HEK293 (cell line): ENCODE measurements at regions of chr14 and their contacts with region 1.

Region 1: DNA sequence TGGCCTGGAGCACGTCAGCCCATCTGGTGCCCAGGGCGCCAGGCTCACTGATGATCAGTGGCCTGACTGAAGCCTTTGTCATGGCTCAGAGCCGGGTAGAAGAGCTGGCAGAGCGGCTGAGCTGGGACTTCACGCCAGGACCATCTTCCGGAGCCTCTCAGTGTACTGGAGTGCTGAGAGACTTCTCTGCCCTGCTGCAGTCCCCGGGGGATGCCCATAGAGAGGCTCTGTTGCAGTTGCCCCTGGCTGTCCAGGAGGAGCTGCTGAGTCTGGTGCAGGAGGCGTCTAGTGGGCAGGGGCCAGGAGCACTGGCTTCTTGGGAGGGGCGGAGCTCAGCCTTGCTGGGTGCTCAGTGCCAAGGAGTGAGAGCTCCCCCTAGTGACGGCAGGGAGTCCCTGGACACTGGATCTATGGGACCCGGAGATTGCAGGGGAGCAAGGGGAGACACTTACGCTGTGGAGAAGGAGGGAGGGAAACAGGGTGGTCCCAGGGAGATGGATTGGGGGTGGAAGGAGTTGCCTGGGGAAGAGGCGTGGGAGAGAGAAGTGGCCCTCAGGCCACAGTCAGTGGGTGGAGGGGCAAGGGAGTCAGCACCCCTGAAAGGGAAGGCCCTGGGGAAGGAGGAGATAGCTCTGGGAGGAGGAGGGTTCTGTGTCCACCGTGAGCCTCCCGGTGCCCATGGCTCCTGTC is 2.0 kb downstream of the KHNYN start:
- H3K4me3 ChIP-seq: no peak overlapping the region
- H3K27ac ChIP-seq: peak overlapping the region; percentile 43
- H3K4me1 ChIP-seq: peaks cover 3% of the 10 kb centered on the region; the same call in 1 of the 2 replicates
- CTCF ChIP-seq: peak; percentile 99

Region 2: DNA sequence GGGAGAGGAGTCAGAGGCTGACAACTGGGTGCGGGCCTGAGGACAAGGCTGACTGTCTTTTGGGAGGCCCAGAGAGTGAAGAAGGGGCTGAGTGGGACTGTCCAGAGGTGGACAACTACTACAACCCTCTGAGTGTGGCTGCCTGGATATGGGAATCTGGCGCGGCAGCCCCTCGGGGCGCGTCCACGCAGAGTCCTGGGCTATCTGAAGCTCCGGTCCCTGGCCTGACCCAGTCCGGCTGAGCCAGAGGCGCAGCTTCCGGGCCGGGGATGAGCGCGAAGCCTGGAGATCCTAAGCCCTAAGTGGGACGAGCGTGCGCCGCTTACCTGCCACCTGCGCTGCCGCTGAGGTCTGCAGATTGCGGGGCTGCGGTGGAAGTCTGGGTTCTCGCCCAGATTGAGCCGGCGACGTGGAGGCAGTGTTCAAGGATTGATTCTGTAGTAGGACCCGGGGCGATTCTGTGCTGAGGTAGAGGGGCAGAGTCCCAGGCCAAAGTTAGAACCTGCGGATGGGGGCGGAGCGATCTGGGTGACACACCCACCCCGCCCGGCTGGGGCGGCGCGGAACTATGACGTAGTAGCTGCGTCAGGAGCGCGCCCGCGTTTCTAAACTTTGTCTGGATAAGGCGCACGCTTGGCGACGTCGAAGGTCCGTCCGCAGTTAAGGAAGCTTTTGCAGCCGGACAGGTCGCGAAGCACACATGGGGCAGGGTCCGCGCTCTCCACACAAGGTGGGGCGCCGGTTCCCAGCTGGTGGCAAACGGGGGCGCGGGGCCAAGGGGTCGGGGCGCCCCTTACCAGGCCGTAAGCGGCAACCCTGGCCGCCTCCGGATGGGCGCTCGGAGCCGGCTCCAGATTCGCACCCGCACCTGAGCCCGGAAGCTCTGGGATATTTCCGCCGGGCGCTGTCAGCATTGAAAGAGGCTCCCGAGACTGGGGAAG is 132.2 kb before region 1 on chr14 and contains the starts of genes DHRS1 and NOP9:
- CTCF ChIA-PET with region 1: interaction called, 14 read pairs
- POLR2A ChIA-PET with region 1: interaction called, 6 read pairs
- H3K4me3 ChIP-seq: peak within 1 kb of the TSS; percentile 85
- H3K27ac ChIP-seq: peak within 1 kb of the TSS; percentile 71
- H3K4me1 ChIP-seq: peaks cover 12% of the 10 kb centered on the region
- CTCF ChIP-seq: no peak

Region 3: GRCh38 chr14:24332268-24332993 is 99.3 kb before region 1 on chr14:
- CTCF ChIA-PET with region 1: interaction called, 468 read pairs
- POLR2A ChIA-PET with region 1: interaction called, 21 read pairs
- H3K4me3 ChIP-seq: no peak overlapping the region
- H3K27ac ChIP-seq: no peak overlapping the region
- H3K4me1 ChIP-seq: peaks cover 4% of the 10 kb centered on the region; the same call in 1 of the 2 replicates
- CTCF ChIP-seq: peak; percentile 67; the same call in 1 of the 2 replicates

Region 4: DNA sequence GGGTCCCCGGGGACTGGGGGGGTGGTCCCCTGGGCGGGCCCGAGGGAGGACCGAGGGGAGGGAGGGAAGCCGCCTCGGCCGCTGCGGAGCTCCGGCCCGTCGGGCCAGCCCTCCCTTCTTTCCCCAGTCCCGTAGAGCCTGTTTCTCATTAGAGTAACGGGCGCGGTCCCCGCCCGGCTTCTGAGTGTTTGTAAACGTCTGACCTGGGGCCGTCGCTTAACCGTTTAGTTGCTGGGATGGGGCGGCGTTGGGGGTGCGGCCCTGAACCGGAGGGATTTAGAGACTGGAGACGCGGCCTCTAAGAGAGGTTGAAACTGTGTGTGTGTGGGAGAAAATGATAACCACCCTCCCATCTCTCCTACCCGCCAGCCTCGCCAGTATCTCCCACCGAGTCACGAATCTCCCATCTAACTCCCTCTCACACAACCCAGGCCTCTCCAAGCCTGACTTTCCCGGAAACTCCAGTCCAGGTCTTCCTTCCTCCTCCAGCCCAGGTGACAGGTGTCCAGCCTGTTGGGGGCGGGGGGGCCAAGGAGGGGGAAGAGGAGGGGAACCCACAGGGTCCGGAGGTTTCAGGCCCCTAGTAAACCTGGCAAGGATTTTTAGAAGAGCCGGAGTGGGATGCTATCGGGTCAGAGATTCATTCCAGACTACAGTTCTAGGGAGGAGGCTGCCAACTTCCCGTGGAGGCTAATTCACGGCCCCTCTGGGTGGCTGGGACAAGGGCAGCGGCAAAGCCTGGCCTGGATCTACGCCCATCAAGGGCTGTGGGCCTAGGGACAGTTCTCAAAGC is 64.8 kb before region 1 on chr14:
- CTCF ChIA-PET with region 1: interaction called, 96 read pairs
- POLR2A ChIA-PET with region 1: interaction called, 45 read pairs
- H3K4me3 ChIP-seq: peak overlapping the region; percentile 39
- H3K27ac ChIP-seq: peak overlapping the region; percentile 97
- H3K4me1 ChIP-seq: peaks cover 12% of the 10 kb centered on the region
- CTCF ChIP-seq: no peak

Region 5: DNA sequence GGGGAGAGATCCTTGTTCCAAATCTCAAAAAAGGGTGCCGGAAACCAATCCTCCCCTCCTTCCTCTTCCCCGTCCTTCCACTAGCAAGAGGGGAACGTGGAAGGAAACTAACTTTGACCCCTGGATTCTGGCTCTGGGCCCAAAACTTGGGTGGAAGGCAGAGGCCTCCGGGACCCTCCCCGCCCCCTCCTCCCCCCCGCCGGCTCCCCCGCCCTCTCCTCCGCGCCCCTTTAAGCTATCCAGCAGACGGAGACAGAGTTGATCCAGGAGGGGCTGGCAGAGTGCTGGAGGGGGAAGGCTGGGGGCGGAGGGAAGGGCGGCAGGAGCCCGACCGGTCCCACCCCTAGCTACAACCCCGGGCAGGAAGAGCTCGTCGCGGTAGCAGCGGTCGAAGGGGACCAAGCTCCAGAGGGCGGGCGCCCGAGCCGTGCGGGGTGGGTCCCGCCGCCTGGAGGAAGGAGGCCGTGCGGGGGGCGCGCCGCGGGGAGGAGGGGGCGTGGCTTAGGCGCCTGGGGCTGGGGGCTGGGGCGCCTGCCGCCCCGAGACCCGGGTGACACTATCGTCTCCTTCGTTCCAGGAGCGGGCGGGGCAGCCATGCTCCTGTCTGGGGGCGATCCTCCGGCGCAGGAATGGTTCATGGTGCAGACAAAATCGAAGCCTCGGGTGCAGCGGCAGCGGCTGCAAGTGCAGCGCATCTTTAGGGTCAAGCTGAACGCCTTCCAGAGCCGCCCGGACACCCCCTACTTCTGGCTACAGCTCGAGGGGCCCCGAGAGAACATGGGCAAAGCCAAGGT is 32.9 kb before region 1 on chr14 and contains the start of gene NYNRIN:
- CTCF ChIA-PET with region 1: interaction called, 8 read pairs
- POLR2A ChIA-PET with region 1: interaction called, 10 read pairs
- H3K4me3 ChIP-seq: peak within 1 kb of the TSS; percentile 43
- H3K27ac ChIP-seq: peak within 1 kb of the TSS; percentile 69
- H3K4me1 ChIP-seq: peaks cover 18% of the 10 kb centered on the region; the same call in 1 of the 2 replicates
- CTCF ChIP-seq: no peak

Region 6: GRCh38 chr14:24418492-24418873 is 13.2 kb before region 1 on chr14:
- CTCF ChIA-PET with region 1: interaction called, 17 read pairs
- POLR2A ChIA-PET with region 1: interaction called, 3 read pairs
- H3K4me3 ChIP-seq: no peak overlapping the region
- H3K27ac ChIP-seq: no peak overlapping the region
- H3K4me1 ChIP-seq: no peaks in the 10 kb centered on the region
- CTCF ChIP-seq: no peak

Region 7: GRCh38 chr14:24535737-24536136 is 104.0 kb after region 1 on chr14:
- CTCF ChIA-PET with region 1: no interaction called
- POLR2A ChIA-PET with region 1: no interaction called
- H3K4me3 ChIP-seq: no peak overlapping the region
- H3K27ac ChIP-seq: no peak overlapping the region
- H3K4me1 ChIP-seq: no peaks in the 10 kb centered on the region
- CTCF ChIP-seq: no peak